ENCODE measurements at regions of chr15 and their contacts with region 1.

Region 1: DNA sequence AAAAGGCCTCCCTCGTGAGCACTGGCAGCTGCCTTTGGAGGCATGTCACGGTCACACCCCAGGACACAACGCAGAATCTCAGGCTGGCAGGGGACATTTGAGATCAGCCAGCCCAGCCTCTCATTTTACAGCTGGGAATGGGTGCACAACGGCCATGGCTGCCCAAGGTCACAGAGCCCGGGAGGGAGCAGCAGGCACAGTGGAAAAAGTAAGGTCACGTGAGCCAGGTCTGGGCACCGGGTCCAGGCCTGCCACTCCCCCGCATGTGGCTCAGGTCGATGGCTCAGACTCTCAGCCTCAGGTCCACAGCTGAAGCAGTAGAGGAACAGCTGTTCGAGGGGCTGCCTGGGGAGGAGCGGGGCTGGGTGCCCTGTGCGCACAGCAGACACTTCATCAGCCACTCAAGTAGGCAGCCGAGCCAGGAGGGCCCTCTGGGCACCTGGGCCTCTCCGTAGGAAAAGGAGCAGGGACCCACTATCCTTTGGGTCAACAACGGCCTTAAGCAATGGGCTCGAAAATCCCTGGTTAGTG is 260.6 kb downstream of the GOLGA6L6 start:
- DNase-seq: no peak
- H3K4me3 ChIP-seq: no peak overlapping the region
- H3K4me1 ChIP-seq: no peaks in the 10 kb centered on the region
- H3K27me3 ChIP-seq: no peaks in the 10 kb centered on the region

Region 2: GRCh38 chr15:20340931-20341661 is 60.1 kb after region 1 on chr15:
- in situ Hi-C with region 1: loop called (anchors 10 kb)
- DNase-seq: no peak
- H3K4me3 ChIP-seq: no peak overlapping the region
- H3K4me1 ChIP-seq: no peaks in the 10 kb centered on the region
- H3K27me3 ChIP-seq: no peaks in the 10 kb centered on the region

Measured in HAP-1 (cell line).